ENCODE measurements at regions of chr5 and their contacts with region 1.

Region 1: GRCh38 chr5:170427672-170428236 is 38.6 kb upstream of the KCNMB1 start:
- DNase-seq: no peak
- ATAC-seq: no peak
- H3K4me3 Mint-ChIP-seq: no peak overlapping the region
- H3K27ac Mint-ChIP-seq: no peak overlapping the region
- H3K4me1 Mint-ChIP-seq: no peaks in the 10 kb centered on the region
- H3K27me3 Mint-ChIP-seq: peaks cover 7% of the 10 kb centered on the region

Region 2: DNA sequence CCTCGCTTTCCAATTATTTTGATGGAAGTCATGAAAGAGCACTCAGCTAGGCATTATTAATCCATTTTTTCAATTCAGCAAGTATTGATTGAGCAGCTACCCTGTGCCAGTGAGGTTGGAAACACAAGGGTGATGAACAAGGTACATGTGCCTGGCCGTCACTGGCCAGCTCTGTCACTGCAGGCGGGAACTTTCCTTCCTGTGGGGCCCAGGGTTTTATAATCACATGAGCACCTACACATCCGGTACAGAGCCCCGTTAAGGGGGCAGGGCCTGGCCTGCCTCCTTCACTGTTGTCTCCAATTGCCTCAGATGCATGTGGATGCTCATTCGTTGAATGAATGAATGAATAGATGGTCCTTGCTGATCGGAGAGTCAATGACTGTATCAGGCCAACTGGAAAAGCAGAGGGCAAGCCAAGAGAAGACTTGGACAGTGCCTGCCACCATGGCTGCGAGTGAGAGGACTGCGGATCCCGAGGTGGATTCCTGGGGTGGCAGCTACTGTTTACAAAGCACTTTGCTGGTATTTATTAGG is 17.3 kb after region 1 on chr5:
- CTCF ChIA-PET with region 1: no interaction called
- POLR2A ChIA-PET with region 1: no interaction called
- DNase-seq: no peak
- ATAC-seq: no peak
- H3K4me3 Mint-ChIP-seq: no peak overlapping the region
- H3K27ac Mint-ChIP-seq: no peak overlapping the region
- H3K4me1 Mint-ChIP-seq: peaks cover 3% of the 10 kb centered on the region
- H3K27me3 Mint-ChIP-seq: peaks cover 4% of the 10 kb centered on the region

Region 3: GRCh38 chr5:170491479-170491878 is 63.7 kb after region 1 on chr5:
- CTCF ChIA-PET with region 1: no interaction called
- POLR2A ChIA-PET with region 1: no interaction called
- DNase-seq: no peak
- ATAC-seq: no peak
- H3K4me3 Mint-ChIP-seq: no peak overlapping the region
- H3K27ac Mint-ChIP-seq: no peak overlapping the region
- H3K4me1 Mint-ChIP-seq: no peaks in the 10 kb centered on the region
- H3K27me3 Mint-ChIP-seq: peaks cover 12% of the 10 kb centered on the region

Region 4: GRCh38 chr5:170633235-170634081 is 205.7 kb after region 1 on chr5:
- CTCF ChIA-PET with region 1: interaction called, 68 read pairs
- POLR2A ChIA-PET with region 1: no interaction called
- DNase-seq: no peak
- ATAC-seq: peak; percentile 24
- H3K4me3 Mint-ChIP-seq: no peak overlapping the region
- H3K27ac Mint-ChIP-seq: no peak overlapping the region
- H3K4me1 Mint-ChIP-seq: peaks cover 11% of the 10 kb centered on the region
- H3K27me3 Mint-ChIP-seq: peaks cover 11% of the 10 kb centered on the region

Measured in activated CD8-positive, alpha-beta T cell treated with anti-CD3 and anti-CD28 coated beads, Interleukin-2, amount 10 ng/mL, durations not matched to agents 7 days and 5 days (primary cell).